Naive thymus-derived CD8-positive, alpha-beta T cell (primary cell): ENCODE measurements at regions of chrX and their contacts with region 1.

Region 1: DNA sequence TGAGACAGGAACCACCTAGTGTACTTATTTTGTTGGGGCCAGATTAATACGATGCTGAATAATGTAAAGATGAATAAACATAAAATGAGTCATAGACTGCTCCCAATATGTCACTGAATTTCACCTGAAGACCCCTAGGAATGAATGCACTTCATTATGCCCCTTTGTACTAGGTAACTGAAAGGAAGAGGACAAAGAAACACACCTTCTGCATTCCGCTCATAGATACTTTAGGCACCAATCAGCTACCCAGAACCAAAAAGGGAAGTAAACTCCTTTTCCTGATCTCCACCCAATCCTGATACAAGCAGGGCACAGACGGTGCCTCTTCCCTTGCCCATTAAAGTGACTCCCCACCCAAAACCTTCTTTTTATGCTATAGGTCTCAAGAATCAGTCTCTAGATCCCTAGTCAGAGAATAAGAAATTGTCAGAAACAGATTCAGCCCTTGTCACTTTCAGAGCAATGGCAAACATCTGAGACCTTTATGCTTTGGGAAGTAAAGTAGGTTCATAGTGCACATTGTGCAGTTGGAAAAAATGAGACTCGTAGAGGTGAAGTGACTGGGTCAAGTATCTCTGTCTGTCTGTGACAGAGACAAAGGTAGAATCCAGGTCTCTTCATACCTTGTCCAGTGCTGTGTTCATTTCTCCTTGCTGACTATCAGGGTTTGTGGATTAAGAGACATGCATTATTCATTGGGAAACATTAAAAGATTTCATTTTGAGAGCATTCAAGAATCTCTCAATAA is 2.3 kb downstream of the GPR174 start:
- DNase-seq: no peak
- ATAC-seq: peak; percentile 29 to 34
- H3K4me3 Mint-ChIP-seq: peak overlapping the region; percentile 81 to 98 (median 94)
- H3K27ac Mint-ChIP-seq: peak overlapping the region; percentile 86 to 99 (median 94)
- H3K4me1 Mint-ChIP-seq: peaks cover 9 to 56% (median 27%) of the 10 kb centered on the region in 4 donors
- H3K27me3 Mint-ChIP-seq: no peaks in the 10 kb centered on the region

Region 2: DNA sequence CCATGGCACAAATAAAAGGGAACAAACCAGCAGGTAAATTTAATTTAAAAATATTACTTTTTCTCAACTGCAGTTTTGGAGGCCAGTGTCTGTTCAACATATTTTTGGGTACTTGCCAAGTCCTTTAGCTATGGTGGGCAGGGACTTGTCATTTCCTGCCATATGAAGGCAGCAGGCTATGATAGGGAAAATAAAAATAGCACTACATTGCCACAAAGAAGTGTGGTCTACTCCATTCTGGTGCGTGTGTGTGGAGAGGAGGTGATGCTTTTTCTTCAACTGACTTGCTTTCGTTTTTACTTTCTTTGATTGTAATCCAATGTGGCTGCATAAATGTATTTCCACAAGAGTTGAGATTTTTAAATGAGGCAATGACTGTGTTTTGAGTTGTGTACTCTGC is 14.8 kb after region 1 on chrX:
- POLR2A ChIA-PET with region 1: interaction called, 19 read pairs
- DNase-seq: peak in 8 of 10 donors; percentile 47 to 84 (median 66)
- ATAC-seq: peak; percentile 88 to 97
- H3K4me3 Mint-ChIP-seq: peak overlapping the region; percentile 75 to 96 (median 91)
- H3K27ac Mint-ChIP-seq: peak overlapping the region; percentile 87 to 99 (median 95)
- H3K4me1 Mint-ChIP-seq: peaks cover 19 to 85% (median 49%) of the 10 kb centered on the region in 4 donors
- H3K27me3 Mint-ChIP-seq: no peaks in the 10 kb centered on the region

Region 3: GRCh38 chrX:79167462-79167861 is 20.6 kb after region 1 on chrX:
- POLR2A ChIA-PET with region 1: interaction called, 19 read pairs
- DNase-seq: no peak
- ATAC-seq: peak; percentile 38 to 50
- H3K4me3 Mint-ChIP-seq: peak overlapping the region; percentile 7 to 82 (median 71)
- H3K27ac Mint-ChIP-seq: peak overlapping the region; percentile 83 to 98 (median 94)
- H3K4me1 Mint-ChIP-seq: peaks cover 20 to 94% (median 64%) of the 10 kb centered on the region in 4 donors
- H3K27me3 Mint-ChIP-seq: no peaks in the 10 kb centered on the region